GM12878 (cell line): ENCODE measurements at regions of chr7 and their contacts with region 1.

Region 1: DNA sequence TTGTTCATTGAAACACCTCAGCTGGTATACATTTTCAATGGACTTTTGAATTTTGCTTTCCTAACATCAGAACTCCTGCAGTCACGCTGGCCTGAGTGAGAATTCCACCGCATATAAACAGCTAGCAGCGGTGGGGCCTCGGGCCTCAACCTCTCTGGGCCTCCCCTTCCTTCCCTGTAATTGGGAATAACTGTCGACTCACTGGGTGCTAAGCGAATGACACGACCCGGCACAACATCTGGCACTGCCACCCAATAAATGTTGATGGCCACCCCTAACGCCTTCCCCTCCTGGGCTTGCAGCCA is 672 bp downstream of the RCC1L start:
- DNase-seq: no peak
- ATAC-seq: no peak
- H3K4me3 ChIP-seq: peak overlapping the region; percentile 100
- H3K27ac ChIP-seq: peak overlapping the region; percentile 82
- H3K4me1 ChIP-seq: 0 out of 2 replicates have a peak, but pooled peaks cover 3% of the 10 kb centered on the region
- H3K27me3 ChIP-seq: no peaks in the 10 kb centered on the region
- CTCF ChIP-seq: no peak
- EP300 ChIP-seq: no peak
- POLR2A ChIP-seq: no peak
- RAD21 ChIP-seq: no peak

Region 2: GRCh38 chr7:75756991-75757676 is 684.2 kb after region 1 on chr7:
- CTCF ChIA-PET with region 1: interaction called, 9 read pairs
- POLR2A ChIA-PET with region 1: no interaction called
- RAD21 ChIA-PET with region 1: no interaction called
- SMC1A ChIA-PET with region 1: interaction called, 9 read pairs
- in situ Hi-C with region 1: loop called (anchors 25 kb)
- intact Hi-C with region 1: loop called (anchors 10 kb)
- DNase-seq: no peak
- ATAC-seq: peak; percentile 83
- H3K4me3 ChIP-seq: no peak overlapping the region
- H3K27ac ChIP-seq: no peak overlapping the region
- H3K4me1 ChIP-seq: no peaks in the 10 kb centered on the region
- H3K27me3 ChIP-seq: no peaks in the 10 kb centered on the region
- CTCF ChIP-seq: peak; percentile 38 to 42 (median 41); a peak in 4 of 6 replicates
- EP300 ChIP-seq: no peak
- POLR2A ChIP-seq: no peak
- RAD21 ChIP-seq: peak; percentile 51